Activated CD8-positive, alpha-beta T cell treated with anti-CD3 and anti-CD28 coated beads for 36 hours (primary cell): ENCODE measurements at regions of chr15 and their contacts with region 1.

Region 1: DNA sequence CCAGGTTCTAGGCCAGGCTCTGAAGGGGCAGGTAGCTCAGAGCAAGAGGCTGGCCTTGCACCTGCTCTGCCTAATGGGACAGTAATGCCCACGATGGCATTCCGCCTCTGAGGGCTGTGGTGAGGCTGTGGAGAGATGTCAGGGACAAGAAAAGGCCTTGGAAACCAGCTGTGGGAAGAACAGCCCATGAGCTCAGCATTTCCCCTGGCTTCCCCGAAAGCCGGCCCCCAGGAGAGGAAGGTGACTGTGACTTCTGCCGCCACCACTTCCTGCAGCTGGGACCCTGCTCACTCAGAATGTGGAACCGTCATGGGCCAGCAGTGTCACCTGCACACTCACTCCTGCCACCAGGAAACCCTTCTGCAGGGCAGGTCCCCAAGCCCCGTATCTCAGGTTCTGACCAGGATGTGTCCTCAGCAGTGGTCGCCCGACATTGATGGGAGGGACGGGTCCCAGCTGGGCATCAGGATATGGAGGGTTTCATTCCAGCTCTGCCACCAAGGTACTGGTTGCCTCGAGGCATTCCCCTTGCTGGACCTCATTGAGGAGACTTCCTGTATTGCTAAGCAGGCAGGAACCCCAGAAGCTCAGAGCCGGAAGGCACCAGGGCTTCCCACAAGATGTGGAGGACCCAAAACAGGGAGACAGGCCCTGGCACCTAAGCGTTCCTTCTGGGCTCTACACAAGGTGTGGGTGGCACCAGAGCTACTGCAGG is 30.7 kb downstream of the SEMA7A start:
- DNase-seq: peak; percentile 96
- ATAC-seq: peak; percentile 67
- H3K4me3 Mint-ChIP-seq: peak overlapping the region; percentile 63
- H3K27ac Mint-ChIP-seq: peak overlapping the region; percentile 84
- H3K4me1 Mint-ChIP-seq: peaks cover 82% of the 10 kb centered on the region
- H3K27me3 Mint-ChIP-seq: no peaks in the 10 kb centered on the region
- CTCF ChIP-seq: no peak

Region 2: DNA sequence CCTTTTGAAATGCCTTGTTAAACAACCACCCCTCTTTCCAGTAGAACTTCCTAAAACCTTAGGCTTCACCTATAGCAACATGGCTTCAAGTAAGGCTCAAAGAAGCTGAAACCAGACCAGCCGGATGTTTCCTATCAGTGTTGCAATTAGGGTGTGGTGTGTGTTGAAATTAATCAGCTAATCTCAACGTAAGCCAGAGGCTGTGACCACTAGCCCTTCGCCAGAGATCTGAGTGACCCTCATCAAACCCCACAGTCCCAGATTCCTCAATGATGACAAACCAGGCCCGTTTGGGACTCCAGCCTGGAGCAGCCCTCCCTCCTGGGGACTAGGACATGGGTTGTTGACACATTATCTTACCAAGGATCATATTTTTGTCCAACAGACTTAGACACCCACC is 62.9 kb before region 1 on chr15:
- CTCF ChIA-PET with region 1: no interaction called
- POLR2A ChIA-PET with region 1: no interaction called
- intact Hi-C with region 1: no loop called
- DNase-seq: no peak
- ATAC-seq: no peak
- H3K4me3 Mint-ChIP-seq: no peak overlapping the region
- H3K27ac Mint-ChIP-seq: no peak overlapping the region
- H3K4me1 Mint-ChIP-seq: peaks cover 4% of the 10 kb centered on the region
- H3K27me3 Mint-ChIP-seq: peaks cover 2% of the 10 kb centered on the region
- CTCF ChIP-seq: no peak

Region 3: GRCh38 chr15:74389241-74390048 is 13.6 kb before region 1 on chr15:
- CTCF ChIA-PET with region 1: interaction called, 27 read pairs
- POLR2A ChIA-PET with region 1: interaction called, 141 read pairs
- intact Hi-C with region 1: loop called (anchors 2 kb)
- DNase-seq: no peak
- ATAC-seq: no peak
- H3K4me3 Mint-ChIP-seq: no peak overlapping the region
- H3K27ac Mint-ChIP-seq: peak overlapping the region; percentile 71
- H3K4me1 Mint-ChIP-seq: peaks cover 79% of the 10 kb centered on the region
- H3K27me3 Mint-ChIP-seq: no peaks in the 10 kb centered on the region
- CTCF ChIP-seq: no peak

Region 4: GRCh38 chr15:74433592-74434262 is 30.7 kb after region 1 on chr15 and contains the start of gene SEMA7A:
- CTCF ChIA-PET with region 1: interaction called, 29 read pairs
- POLR2A ChIA-PET with region 1: interaction called, 56 read pairs
- intact Hi-C with region 1: no loop called
- DNase-seq: peak; percentile 85
- ATAC-seq: peak; percentile 89
- H3K4me3 Mint-ChIP-seq: peak within 1 kb of the TSS; percentile 93
- H3K27ac Mint-ChIP-seq: peak within 1 kb of the TSS; percentile 89
- H3K4me1 Mint-ChIP-seq: peaks cover 64% of the 10 kb centered on the region
- H3K27me3 Mint-ChIP-seq: no peaks in the 10 kb centered on the region
- CTCF ChIP-seq: no peak
- total RNA-seq, gene SEMA7A: 62.4 TPM

Region 5: GRCh38 chr15:74438721-74439316 is 35.8 kb after region 1 on chr15:
- CTCF ChIA-PET with region 1: interaction called, 29 read pairs
- POLR2A ChIA-PET with region 1: interaction called, 56 read pairs
- intact Hi-C with region 1: no loop called
- DNase-seq: peak; percentile 88
- ATAC-seq: peak; percentile 78
- H3K4me3 Mint-ChIP-seq: no peak overlapping the region
- H3K27ac Mint-ChIP-seq: no peak overlapping the region
- H3K4me1 Mint-ChIP-seq: peaks cover 32% of the 10 kb centered on the region
- H3K27me3 Mint-ChIP-seq: no peaks in the 10 kb centered on the region
- CTCF ChIP-seq: peak; percentile 87

Region 6: GRCh38 chr15:74460871-74461846 is 58.1 kb after region 1 on chr15 and contains the start of gene UBL7:
- CTCF ChIA-PET with region 1: interaction called, 5 read pairs
- POLR2A ChIA-PET with region 1: interaction called, 23 read pairs
- intact Hi-C with region 1: no loop called
- DNase-seq: peak; percentile 99
- ATAC-seq: peak; percentile 97
- H3K4me3 Mint-ChIP-seq: peak within 1 kb of the TSS; percentile 80
- H3K27ac Mint-ChIP-seq: peak within 1 kb of the TSS; percentile 92
- H3K4me1 Mint-ChIP-seq: peaks cover 49% of the 10 kb centered on the region
- H3K27me3 Mint-ChIP-seq: no peaks in the 10 kb centered on the region
- CTCF ChIP-seq: no peak
- total RNA-seq, gene UBL7: 48.8 to 53.3 TPM

Region 7: GRCh38 chr15:74540761-74541493 is 137.9 kb after region 1 on chr15 and contains the start of gene ARID3B:
- CTCF ChIA-PET with region 1: interaction called, 5 read pairs
- POLR2A ChIA-PET with region 1: interaction called, 7 read pairs
- intact Hi-C with region 1: loop called (anchors 5 kb)
- DNase-seq: peak; percentile 99
- ATAC-seq: peak; percentile 88
- H3K4me3 Mint-ChIP-seq: peak within 1 kb of the TSS; percentile 98
- H3K27ac Mint-ChIP-seq: peak within 1 kb of the TSS; percentile 99
- H3K4me1 Mint-ChIP-seq: peaks cover 48% of the 10 kb centered on the region
- H3K27me3 Mint-ChIP-seq: no peaks in the 10 kb centered on the region
- CTCF ChIP-seq: no peak
- total RNA-seq, gene ARID3B: 35.2 to 36.2 TPM

Region 8: DNA sequence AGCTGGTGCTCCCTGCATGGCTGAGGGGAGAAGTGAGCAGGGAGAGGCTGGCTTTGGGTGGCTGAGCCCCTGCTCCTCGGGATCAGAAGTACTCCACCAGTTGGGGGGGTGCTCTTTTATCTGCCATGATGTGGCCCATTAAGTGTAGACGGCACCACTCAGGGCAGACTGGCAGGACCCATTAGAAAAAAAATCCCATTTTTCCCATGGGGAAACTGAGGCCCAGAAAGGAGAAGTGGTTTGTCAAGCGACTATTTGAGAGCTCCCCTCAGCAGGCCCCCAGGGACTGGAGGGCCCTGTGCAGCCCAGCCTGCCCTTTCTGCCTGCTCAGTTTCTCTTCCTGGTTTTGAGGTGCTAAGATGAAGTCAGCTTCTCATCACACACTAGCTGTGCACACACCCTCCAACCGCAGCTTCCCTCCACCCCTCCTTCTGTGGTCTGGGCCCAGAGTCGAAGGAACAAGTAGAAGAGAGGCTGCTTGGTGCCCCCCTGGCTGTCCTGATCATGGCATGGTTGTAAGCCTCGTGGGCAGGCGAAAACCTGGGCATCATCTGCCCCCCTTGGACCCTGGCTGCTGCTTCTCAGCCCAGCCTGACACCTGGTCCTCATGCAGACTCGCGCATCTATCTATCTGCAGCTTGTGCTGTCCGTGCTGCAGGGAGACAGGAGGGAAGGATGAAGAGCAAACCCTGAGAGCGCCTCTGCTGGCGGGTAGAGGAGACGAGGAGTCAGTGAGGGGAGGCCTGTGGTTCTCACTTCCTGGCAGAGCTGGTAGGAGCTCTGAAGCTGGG is 384.4 kb after region 1 on chr15:
- CTCF ChIA-PET with region 1: no interaction called
- POLR2A ChIA-PET with region 1: no interaction called
- intact Hi-C with region 1: loop called (anchors 5 kb)
- DNase-seq: peak; percentile 98
- ATAC-seq: peak; percentile 70
- H3K4me3 Mint-ChIP-seq: peak overlapping the region; percentile 98
- H3K27ac Mint-ChIP-seq: peak overlapping the region; percentile 98
- H3K4me1 Mint-ChIP-seq: peaks cover 53% of the 10 kb centered on the region
- H3K27me3 Mint-ChIP-seq: no peaks in the 10 kb centered on the region
- CTCF ChIP-seq: peak; percentile 81